ENCODE measurements at regions of chr4 and their contacts with region 1.

Region 1: GRCh38 chr4:81970454-81970853 is 403.3 kb downstream of the HNRNPD start:
- DNase-seq: no peak
- ATAC-seq: peak; percentile 19
- H3K4me3 Mint-ChIP-seq: no peak overlapping the region
- H3K27ac Mint-ChIP-seq: no peak overlapping the region
- H3K4me1 Mint-ChIP-seq: peaks cover 25% of the 10 kb centered on the region
- H3K27me3 Mint-ChIP-seq: no peaks in the 10 kb centered on the region

Region 2: GRCh38 chr4:81627590-81627989 is 342.9 kb before region 1 on chr4:
- CTCF ChIA-PET with region 1: no interaction called
- POLR2A ChIA-PET with region 1: no interaction called
- intact Hi-C with region 1: no loop called
- DNase-seq: no peak
- ATAC-seq: no peak
- H3K4me3 Mint-ChIP-seq: no peak overlapping the region
- H3K27ac Mint-ChIP-seq: no peak overlapping the region
- H3K4me1 Mint-ChIP-seq: peaks cover 23% of the 10 kb centered on the region
- H3K27me3 Mint-ChIP-seq: no peaks in the 10 kb centered on the region

Region 3: DNA sequence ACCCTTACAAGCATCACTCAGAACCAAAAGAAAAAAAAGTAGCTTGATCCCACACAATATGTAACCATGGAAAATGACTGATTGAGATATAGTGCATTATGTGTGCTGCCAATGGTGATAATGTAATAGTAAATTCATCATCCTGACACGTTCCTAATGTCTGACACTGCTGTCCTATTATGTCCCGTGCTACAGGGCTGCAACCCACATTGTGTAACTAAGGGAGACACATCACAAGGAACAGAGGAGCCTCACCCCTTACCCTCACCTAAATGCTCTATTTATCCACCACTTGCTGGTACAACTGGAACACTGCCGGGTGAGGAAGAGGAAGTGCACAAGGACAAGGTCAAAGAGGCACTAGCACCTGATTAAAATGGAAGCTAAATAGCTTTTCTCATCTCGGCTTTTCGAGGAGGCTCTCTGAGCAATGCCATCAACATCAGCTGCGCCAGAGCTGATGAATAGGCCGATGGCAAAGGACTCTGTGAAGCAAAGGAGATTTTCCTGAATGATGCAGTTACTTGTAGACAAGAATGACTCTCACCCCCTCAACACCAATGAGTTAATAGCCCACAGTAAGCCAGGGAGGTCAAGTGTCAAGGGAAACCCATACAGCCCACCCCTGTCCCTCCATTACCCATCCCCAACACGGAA is 221.7 kb after region 1 on chr4:
- CTCF ChIA-PET with region 1: no interaction called
- POLR2A ChIA-PET with region 1: no interaction called
- intact Hi-C with region 1: loop called in 1 of 2 experiments (anchors 10 kb)
- DNase-seq: no peak
- ATAC-seq: no peak
- H3K4me3 Mint-ChIP-seq: no peak overlapping the region
- H3K27ac Mint-ChIP-seq: no peak overlapping the region
- H3K4me1 Mint-ChIP-seq: no peaks in the 10 kb centered on the region
- H3K27me3 Mint-ChIP-seq: no peaks in the 10 kb centered on the region

Measured in activated CD4-positive, alpha-beta T cell treated with anti-CD3 and anti-CD28 coated beads for 36 hours (primary cell).